Activated CD4-positive, alpha-beta T cell treated with anti-CD3 and anti-CD28 coated beads, Interleukin-2, amount 10 ng/mL, durations not matched to agents 24 days and 14 days (primary cell): ENCODE measurements at regions of chr1 and their contacts with region 1.

Region 1: DNA sequence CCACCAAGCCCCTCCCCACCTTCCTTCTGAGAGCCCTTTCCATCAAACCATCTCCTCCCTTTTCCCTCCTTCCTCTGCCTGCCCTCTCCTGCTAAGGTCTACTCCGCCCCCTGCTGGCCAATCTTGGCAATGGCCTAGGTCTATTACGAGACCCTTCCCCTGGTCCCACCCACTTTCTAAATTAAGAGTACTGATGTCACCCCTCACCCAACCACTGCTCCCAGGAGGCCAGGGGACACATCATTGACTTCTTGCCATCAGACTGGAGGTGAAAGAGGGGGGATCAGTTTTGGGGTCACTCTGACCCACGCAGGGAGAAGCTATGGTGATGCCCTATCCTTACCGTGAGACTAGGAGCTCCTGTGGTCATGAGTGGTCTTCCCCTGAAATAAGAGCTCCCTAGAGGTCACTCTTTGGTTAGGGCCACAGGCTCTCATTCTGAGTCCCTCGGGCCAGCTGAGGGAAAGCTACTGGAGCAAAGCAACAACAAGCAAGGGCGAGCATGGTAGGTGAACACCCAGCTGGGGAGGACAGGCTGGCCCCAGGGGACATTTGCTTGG is 34.6 kb upstream of the S100A7 start:
- DNase-seq: peak; percentile 93
- H3K4me3 Mint-ChIP-seq: no peak overlapping the region
- H3K27ac Mint-ChIP-seq: no peak overlapping the region
- H3K4me1 Mint-ChIP-seq: peaks cover 3% of the 10 kb centered on the region
- H3K27me3 Mint-ChIP-seq: peaks cover 39% of the 10 kb centered on the region

Region 2: DNA sequence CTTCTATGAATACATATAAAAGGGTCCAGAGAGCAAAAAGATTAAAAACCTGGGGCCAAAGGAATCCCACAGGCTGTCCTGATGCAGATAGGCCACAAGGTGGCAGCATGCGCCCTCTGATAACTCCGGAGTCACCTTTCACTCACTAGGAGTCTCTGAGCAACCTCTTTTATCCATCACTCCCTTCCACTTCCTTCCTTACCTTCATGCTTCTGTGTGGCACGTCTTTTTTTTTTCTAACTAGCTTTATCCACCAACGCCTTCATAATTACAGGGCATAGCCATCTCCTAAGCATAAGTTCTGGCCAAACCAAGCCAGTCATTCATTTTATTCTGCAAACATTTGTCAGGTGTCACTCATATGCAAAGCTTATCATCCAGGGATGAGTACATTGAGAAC is 142.5 kb before region 1 on chr1:
- intact Hi-C with region 1: loop called (anchors 1 kb)
- DNase-seq: peak; percentile 87
- H3K4me3 Mint-ChIP-seq: no peak overlapping the region
- H3K27ac Mint-ChIP-seq: no peak overlapping the region
- H3K4me1 Mint-ChIP-seq: peaks cover 4% of the 10 kb centered on the region
- H3K27me3 Mint-ChIP-seq: peaks cover 14% of the 10 kb centered on the region

Region 3: GRCh38 chr1:153465811-153466636 is 29.0 kb before region 1 on chr1:
- intact Hi-C with region 1: loop called (anchors 1 kb)
- DNase-seq: peak; percentile 89
- H3K4me3 Mint-ChIP-seq: no peak overlapping the region
- H3K27ac Mint-ChIP-seq: no peak overlapping the region
- H3K4me1 Mint-ChIP-seq: peaks cover 3% of the 10 kb centered on the region
- H3K27me3 Mint-ChIP-seq: peaks cover 18% of the 10 kb centered on the region

Region 4: GRCh38 chr1:153617675-153618074 is 122.6 kb after region 1 on chr1:
- intact Hi-C with region 1: no loop called
- DNase-seq: peak; percentile 93
- H3K4me3 Mint-ChIP-seq: no peak overlapping the region
- H3K27ac Mint-ChIP-seq: no peak overlapping the region
- H3K4me1 Mint-ChIP-seq: peaks cover 8% of the 10 kb centered on the region
- H3K27me3 Mint-ChIP-seq: no peaks in the 10 kb centered on the region